ENCODE measurements at regions of chr14 and their contacts with region 1.

Region 1: DNA sequence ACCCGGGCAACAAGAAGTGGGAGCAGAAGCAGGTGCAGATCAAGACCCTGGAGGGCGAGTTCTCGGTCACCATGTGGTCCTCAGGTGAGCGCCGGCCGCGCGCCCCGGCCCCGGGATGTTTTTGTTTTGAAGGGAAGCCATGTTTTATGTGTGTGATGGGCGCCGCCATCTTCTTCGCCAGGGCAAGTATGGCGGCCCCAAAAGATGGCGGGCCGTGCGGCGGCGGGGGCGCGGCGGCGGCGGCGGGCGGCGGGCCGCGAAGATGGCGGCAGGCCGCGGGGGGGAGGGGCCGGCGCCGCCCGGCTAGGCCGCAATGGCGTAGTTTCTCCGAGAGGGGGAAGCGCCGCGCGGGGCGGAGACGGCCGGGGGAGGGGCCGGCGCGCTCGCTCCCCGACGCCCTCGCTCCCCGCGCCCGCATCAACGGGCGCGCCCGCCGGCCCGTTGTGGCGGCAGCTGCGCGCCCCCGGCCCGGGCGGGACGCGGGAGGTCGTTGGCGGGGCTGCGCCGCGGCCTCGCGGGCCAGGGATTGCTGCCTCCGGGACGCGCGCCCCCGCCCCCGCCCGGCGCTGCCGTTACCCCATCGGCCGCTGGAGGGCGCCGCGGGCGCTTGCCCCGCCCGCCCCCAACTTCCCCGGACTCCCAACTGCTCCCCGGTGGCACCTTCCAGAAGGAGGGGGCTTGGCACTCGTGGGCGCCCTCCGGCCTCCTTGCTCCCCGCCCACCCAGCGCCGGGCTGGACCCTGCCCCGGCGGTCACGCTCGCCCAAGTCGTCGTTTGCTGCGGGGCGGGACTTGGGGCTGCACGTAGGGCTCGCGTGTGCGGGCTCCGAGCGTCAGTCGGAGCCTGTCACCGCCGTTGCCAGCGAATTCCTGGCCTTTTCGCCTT is 1.1 kb downstream of the YY1 start:
- DNase-seq: peak; percentile 96
- H3K4me3 Mint-ChIP-seq: peak overlapping the region; percentile 96
- H3K27ac Mint-ChIP-seq: peak overlapping the region; percentile 89
- H3K4me1 Mint-ChIP-seq: peaks cover 46% of the 10 kb centered on the region
- H3K27me3 Mint-ChIP-seq: peaks cover 2% of the 10 kb centered on the region

Region 2: GRCh38 chr14:100221533-100222223 is 18.4 kb before region 1 on chr14:
- intact Hi-C with region 1: loop called (anchors 1 kb)
- DNase-seq: peak; percentile 93
- H3K4me3 Mint-ChIP-seq: no peak overlapping the region
- H3K27ac Mint-ChIP-seq: no peak overlapping the region
- H3K4me1 Mint-ChIP-seq: peaks cover 6% of the 10 kb centered on the region
- H3K27me3 Mint-ChIP-seq: no peaks in the 10 kb centered on the region

Region 3: GRCh38 chr14:100278702-100279101 is 38.6 kb after region 1 on chr14:
- intact Hi-C with region 1: loop called (anchors 5 kb)
- DNase-seq: no peak
- H3K4me3 Mint-ChIP-seq: no peak overlapping the region
- H3K27ac Mint-ChIP-seq: peak overlapping the region; percentile 60
- H3K4me1 Mint-ChIP-seq: peaks cover 31% of the 10 kb centered on the region
- H3K27me3 Mint-ChIP-seq: no peaks in the 10 kb centered on the region

Measured in activated CD4-positive, alpha-beta T cell treated with anti-CD3 and anti-CD28 coated beads, Interleukin-2, amount 10 ng/mL, durations not matched to agents 24 days and 14 days (primary cell).